Pancreas (tissue), 10 donors: ENCODE measurements at regions of chr12 and their contacts with region 1.

Region 1: GRCh38 chr12:49232940-49233841 is 31.7 kb upstream of the TUBA1C start:
- DNase-seq: peak; percentile 25 to 71 (median 44)
- ATAC-seq: peak in 3 of 4 donors; percentile 4 to 26 (median 22)
- H3K4me3 ChIP-seq: no peak overlapping the region
- H3K27ac ChIP-seq: peak overlapping the region; percentile 18 to 97 (median 57)
- H3K4me1 ChIP-seq: peaks cover 0 to 4% (median 4%) of the 10 kb centered on the region in 3 donors
- H3K27me3 ChIP-seq: no peaks in the 10 kb centered on the region
- CTCF ChIP-seq: no peak

Region 2: DNA sequence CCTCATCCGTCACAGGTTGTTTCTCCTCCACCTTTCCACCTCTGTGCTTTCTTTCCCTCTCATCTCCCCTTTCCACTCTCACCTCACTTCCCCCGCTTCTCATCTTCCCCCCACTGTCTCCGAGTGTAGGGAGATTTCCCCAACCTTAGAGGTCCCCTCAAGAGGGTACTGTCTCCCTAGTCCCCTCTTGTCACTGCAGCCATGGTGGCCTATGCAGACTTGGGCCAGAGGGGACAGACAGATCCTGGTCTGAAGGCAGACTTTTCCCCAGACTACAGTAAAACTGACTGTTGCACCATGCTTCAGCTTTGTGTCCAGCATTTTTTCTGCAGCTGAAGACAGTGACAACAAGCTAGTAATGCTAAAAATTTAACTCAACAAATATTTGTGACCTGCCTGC is 592.3 kb before region 1 on chr12:
- intact Hi-C with region 1: no loop called
- DNase-seq: no peak
- ATAC-seq: no peak
- H3K4me3 ChIP-seq: no peak overlapping the region
- H3K27ac ChIP-seq: no peak overlapping the region
- H3K4me1 ChIP-seq: no peaks in the 10 kb centered on the region
- H3K27me3 ChIP-seq: no peaks in the 10 kb centered on the region
- CTCF ChIP-seq: no peak

Region 3: DNA sequence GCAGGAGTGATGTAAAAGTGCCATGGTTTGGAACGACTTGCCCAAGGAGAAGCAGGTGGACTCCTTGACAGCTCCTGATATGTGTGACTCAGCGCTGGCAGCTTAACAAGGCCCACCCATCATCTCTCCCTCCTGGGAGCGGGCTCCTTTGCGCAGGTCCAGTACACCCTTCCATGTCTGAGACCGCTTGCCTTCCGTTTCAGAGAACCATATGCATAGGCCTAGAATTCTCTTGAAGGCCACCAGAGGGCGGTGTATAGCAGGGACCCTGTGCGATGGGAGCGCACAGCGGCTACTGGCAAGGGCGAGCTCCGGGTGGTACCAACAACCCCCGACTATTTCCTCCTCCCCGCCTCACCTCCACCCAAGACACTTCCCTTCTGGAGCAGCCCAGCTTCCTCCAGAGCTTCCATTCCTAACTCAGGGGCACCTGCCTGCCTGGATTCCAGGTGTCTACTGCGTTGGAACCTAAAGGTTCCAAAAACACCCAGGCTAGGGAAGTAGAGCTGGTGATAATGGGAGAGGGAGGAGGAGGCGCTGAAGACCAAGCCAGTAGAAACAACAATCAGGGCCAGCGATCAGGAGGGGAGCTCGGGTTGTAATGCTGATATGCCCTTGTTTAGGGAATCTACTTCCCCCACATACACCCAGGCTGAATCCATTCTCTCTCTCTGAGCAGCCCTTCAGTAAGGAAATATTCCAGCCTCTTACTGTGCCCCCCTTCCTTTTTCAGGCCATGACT is 144.8 kb before region 1 on chr12:
- intact Hi-C with region 1: loop called in 1 of 3 experiments (anchors 5 kb)
- DNase-seq: peak; percentile 71 to 92 (median 76)
- ATAC-seq: peak; percentile 93 to 97 (median 95)
- H3K4me3 ChIP-seq: no peak overlapping the region
- H3K27ac ChIP-seq: no peak overlapping the region
- H3K4me1 ChIP-seq: peaks cover 0 to 14% (median 6%) of the 10 kb centered on the region in 3 donors
- H3K27me3 ChIP-seq: peaks cover 0 to 28% (median 4%) of the 10 kb centered on the region in 4 donors
- CTCF ChIP-seq: peak; percentile 79 to 90 (median 84)

Region 4: GRCh38 chr12:49121047-49121696 is 112.0 kb before region 1 on chr12:
- intact Hi-C with region 1: loop called in 1 of 3 experiments (anchors 10 kb)
- DNase-seq: peak in 2 of 6 donors; percentile 24 to 36
- ATAC-seq: peak; percentile 71 to 93 (median 90)
- H3K4me3 ChIP-seq: no peak overlapping the region
- H3K27ac ChIP-seq: no peak overlapping the region
- H3K4me1 ChIP-seq: no peaks in the 10 kb centered on the region
- H3K27me3 ChIP-seq: no peaks in the 10 kb centered on the region
- CTCF ChIP-seq: peak in 3 of 4 donors; percentile 14 to 35 (median 29)

Region 5: DNA sequence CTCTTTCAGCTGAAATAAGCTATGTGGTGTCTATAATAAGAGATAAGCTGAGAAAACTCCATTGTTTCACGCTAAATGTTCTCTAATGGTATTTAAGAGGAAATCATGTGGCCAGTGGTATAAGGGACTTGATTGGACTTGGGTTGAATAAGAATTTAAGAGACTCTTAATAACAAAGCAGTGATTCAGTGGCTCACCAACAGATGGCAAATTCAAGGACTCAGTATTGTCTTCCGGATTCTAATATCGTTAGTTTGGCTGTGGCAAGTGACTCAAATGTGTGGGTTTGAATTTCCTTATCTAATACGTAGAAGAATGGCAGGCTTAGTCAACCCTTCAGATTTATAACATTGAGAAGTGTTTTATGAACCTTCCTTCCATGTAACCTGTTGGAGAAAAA is 256.5 kb after region 1 on chr12:
- intact Hi-C with region 1: no loop called
- DNase-seq: no peak
- ATAC-seq: no peak
- H3K4me3 ChIP-seq: no peak overlapping the region
- H3K27ac ChIP-seq: no peak overlapping the region
- H3K4me1 ChIP-seq: no peaks in the 10 kb centered on the region
- H3K27me3 ChIP-seq: no peaks in the 10 kb centered on the region
- CTCF ChIP-seq: no peak

Region 6: DNA sequence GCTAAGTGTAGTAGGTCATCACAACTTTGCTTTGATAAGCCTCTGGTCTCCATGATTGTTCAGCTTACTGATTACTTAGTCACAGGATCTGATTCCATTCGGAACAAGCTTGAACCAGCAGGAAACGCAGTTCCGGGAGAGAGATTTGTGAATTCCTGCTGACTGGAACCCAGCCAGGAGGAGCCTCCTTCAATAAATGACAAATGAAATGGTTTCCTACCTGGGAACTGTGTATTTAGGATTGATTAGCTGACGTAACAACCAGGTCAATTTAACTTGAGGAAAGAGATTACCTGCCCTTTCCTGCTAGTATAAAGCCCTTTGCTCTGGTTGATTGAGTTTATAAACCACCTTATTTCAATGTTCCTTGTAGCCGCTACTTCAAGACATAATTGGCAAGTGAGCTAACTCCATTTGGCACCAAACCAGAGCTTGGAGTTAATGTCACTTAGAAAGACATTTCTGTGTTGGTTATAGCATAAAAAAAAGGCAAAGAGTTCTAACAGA is 270.5 kb after region 1 on chr12:
- intact Hi-C with region 1: no loop called
- DNase-seq: peak in 3 of 6 donors; percentile 26 to 31 (median 30)
- ATAC-seq: peak in 2 of 4 donors; percentile 64 to 71
- H3K4me3 ChIP-seq: no peak overlapping the region
- H3K27ac ChIP-seq: peak overlapping the region in 2 of 4 donors; percentile 33 to 38
- H3K4me1 ChIP-seq: no peaks in the 10 kb centered on the region
- H3K27me3 ChIP-seq: no peaks in the 10 kb centered on the region
- CTCF ChIP-seq: no peak

Region 7: GRCh38 chr12:49920241-49920921 is 687.2 kb after region 1 on chr12:
- intact Hi-C with region 1: no loop called
- DNase-seq: no peak
- ATAC-seq: peak in 3 of 4 donors; percentile 14 to 26 (median 26)
- H3K4me3 ChIP-seq: no peak overlapping the region
- H3K27ac ChIP-seq: no peak overlapping the region
- H3K4me1 ChIP-seq: peaks cover 0 to 6% (median 4%) of the 10 kb centered on the region in 3 donors
- H3K27me3 ChIP-seq: no peaks in the 10 kb centered on the region
- CTCF ChIP-seq: no peak